AG04449 (cell line): ENCODE measurements at regions of chrX and their contacts with region 1.

Region 1: DNA sequence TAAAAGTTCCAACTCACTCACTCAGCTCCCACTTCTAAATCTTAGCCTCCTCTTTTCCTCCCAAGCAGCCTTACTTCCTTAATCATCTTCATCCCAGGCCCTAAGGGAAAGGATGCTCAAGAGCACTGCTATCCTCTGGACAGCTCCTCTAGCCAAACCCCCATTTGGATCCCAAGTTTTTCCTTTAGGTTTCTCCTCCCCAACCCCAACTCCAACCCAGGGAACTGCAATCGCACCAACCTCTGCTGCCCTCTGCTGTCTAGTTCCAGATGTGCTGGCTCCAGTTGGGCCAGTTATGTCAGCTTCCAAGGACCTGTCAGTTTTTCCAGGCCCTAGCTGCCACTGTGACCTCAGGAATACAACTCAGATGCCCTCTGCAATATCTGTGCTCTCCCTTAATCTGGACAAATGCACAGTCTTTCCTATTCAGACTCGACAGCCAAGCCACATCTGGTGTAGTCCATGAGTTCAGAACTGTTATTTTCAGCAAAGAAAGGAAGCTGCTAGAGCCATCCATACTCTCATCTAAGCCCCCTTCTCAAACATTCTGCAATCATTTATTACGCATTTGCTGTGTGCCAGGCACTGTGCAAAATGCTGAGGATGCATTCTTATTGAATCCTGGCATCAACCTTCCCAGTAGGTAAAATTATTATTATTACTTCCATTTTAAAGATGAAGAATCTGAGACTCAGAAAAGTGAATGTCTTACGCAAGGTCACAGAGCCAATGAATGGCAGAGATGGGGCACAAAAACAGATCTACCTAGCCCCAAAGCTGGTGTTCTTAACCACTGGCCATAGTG is 12.3 kb upstream of the XPNPEP2 start:
- DNase-seq: no peak
- H3K4me3 ChIP-seq: no peak overlapping the region
- CTCF ChIP-seq: peak; percentile 75

Region 2: GRCh38 chrX:129600981-129601424 is 125.5 kb before region 1 on chrX:
- CTCF ChIA-PET with region 1: interaction called, 47 read pairs
- POLR2A ChIA-PET with region 1: no interaction called
- DNase-seq: no peak
- H3K4me3 ChIP-seq: no peak overlapping the region
- CTCF ChIP-seq: peak; percentile 43

Region 3: GRCh38 chrX:129622757-129623341 is 103.7 kb before region 1 on chrX:
- CTCF ChIA-PET with region 1: interaction called, 16 read pairs
- POLR2A ChIA-PET with region 1: no interaction called
- DNase-seq: no peak
- H3K4me3 ChIP-seq: no peak overlapping the region
- CTCF ChIP-seq: no peak

Region 4: GRCh38 chrX:129654419-129655165 is 71.9 kb before region 1 on chrX and contains the start of gene APLN:
- CTCF ChIA-PET with region 1: interaction called, 16 read pairs
- POLR2A ChIA-PET with region 1: no interaction called
- DNase-seq: no peak
- H3K4me3 ChIP-seq: peak within 1 kb of the TSS; percentile 51
- CTCF ChIP-seq: no peak

Region 5: DNA sequence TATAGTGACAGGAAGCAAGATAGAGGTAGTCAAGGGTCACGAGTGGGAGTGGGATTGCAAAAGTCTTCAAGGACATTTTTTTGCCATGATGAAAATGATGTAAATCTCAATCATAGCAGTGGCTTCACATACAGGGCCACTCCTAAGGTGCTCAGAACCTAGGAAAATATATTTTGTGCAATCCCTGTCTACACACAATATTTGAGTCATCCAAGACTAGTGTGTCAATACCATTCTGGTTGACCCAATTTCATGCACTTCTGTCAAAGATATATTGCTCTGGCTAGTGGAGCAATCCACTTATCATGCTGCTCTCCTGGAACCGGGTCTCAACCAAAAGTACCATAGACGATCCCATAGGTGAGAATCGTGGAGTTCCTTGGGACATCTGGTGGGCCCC is 11.9 kb before region 1 on chrX:
- CTCF ChIA-PET with region 1: interaction called, 19 read pairs
- POLR2A ChIA-PET with region 1: no interaction called
- DNase-seq: no peak
- H3K4me3 ChIP-seq: no peak overlapping the region
- CTCF ChIP-seq: no peak